Dorsolateral prefrontal cortex (tissue), 120 donors: ENCODE measurements at regions of chr21 and their contacts with region 1.

Region 1: DNA sequence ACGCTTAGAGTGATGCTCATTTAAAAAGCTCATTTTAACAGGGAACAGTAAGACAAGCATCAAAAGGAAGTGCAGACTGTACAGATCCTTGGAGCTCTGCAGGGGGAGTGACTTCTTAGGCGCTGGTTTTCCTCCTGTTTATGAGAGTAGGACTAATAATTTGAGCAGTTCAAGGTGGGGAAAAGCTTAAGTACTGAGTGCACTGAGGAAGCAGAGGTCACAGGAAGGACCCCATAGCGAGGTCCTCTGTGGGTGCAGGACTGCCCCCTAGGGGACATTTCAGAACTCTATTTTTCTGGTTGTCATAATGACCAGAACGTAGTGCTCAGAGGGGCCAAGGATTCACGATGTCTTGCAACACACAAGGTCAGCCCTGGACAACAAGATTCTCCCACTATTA is 112.1 kb downstream of the HLCS start:
- DNase-seq: peak in 4 of 10 donors; percentile 11 to 49 (median 34)
- H3K4me3 ChIP-seq: peak overlapping the region in 1 of 59 donors; percentile 5
- H3K27ac ChIP-seq: peak overlapping the region in 2 of 59 donors; percentile 12 to 50
- H3K27me3 ChIP-seq: no peaks in the 10 kb centered on the region
- CTCF ChIP-seq: peak; percentile 39 to 92 (median 75)

Region 2: GRCh38 chr21:36028127-36029069 is 826.0 kb before region 1 on chr21:
- intact Hi-C with region 1: no loop called
- DNase-seq: peak; percentile 64 to 87 (median 76)
- H3K4me3 ChIP-seq: no peak overlapping the region
- H3K27ac ChIP-seq: no peak overlapping the region
- H3K27me3 ChIP-seq: no peaks in the 10 kb centered on the region
- CTCF ChIP-seq: peak; percentile 73 to 97 (median 94)

Region 3: DNA sequence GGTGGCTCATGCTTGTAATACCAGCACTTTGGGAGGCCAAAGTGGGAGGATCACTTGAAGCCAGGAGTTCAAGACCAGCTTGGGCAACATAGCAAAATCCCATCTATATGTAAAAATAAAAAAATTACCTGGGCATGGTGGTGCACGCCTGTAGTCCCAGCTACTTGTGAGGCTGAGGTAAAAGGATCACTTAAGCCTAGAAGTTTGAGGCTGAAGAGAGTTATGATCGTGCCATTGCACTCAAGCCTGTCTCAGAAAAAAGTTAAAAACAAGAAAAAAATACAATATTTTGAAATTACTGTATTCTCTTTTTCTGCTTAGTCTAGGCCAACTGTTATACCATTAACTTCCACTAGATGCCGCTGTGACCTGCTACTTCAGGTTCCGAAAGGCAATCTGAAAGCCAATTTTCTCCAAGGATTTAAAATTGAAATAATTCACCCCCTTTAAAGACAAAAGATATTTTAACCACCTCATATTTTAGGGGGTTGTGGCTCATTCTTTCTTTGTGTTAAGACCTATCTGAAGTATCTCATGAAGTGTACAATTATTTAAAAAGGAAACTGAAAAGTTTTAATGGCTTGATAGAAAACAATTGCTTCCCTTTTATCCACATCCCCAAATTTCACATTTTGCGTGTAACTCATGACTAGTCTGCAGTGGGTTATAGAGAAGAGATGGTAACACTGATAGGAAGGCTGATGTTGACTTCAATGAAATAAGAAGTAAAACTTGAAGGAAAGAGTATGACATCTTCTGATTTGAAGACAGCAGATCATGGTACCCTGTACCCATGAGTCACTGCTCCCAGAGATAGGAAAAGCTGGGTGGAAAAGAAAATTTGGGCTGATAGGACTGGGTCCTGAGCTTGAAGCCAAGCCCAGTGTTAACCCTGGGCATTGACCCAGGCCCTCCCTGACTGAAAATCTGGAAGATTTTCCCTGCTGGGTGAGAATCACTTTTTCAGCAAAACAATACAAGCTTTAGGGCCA is 350.0 kb before region 1 on chr21:
- intact Hi-C with region 1: loop called in 1 of 2 experiments (anchors 5 kb)
- DNase-seq: peak in 2 of 10 donors; percentile 37 to 43
- H3K4me3 ChIP-seq: no peak overlapping the region
- H3K27ac ChIP-seq: no peak overlapping the region
- H3K27me3 ChIP-seq: peaks cover 0 to under 1% (median 0%) of the 10 kb centered on the region in 45 donors
- CTCF ChIP-seq: peak; percentile 83 to 99 (median 95)

Region 4: DNA sequence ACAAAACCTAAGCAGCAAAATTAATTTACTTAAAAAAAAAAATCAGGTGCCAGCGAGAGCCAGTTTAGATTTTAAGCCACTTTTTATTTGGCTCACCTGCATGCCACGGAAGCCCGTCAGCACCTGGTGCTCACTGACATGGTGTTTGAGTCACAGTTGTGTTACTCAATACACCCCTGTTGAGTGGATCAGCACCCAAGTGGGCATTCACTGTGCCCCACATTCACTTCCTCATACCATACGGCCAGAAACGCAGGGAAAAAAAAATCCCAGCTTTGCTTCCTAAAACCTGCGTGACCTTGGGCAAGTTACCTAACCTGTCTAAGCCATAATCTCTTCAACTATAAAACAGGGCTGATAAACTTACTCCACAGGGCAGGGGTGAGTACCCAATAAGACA is 198.3 kb before region 1 on chr21:
- intact Hi-C with region 1: loop called (anchors 5 kb)
- DNase-seq: no peak
- H3K4me3 ChIP-seq: no peak overlapping the region
- H3K27ac ChIP-seq: peak overlapping the region in 1 of 59 donors; percentile 89
- H3K27me3 ChIP-seq: peaks cover 0 to 36% (median 10%) of the 10 kb centered on the region in 45 donors
- CTCF ChIP-seq: no peak

Region 5: GRCh38 chr21:36747815-36748383 is 106.5 kb before region 1 on chr21:
- intact Hi-C with region 1: loop called in 1 of 2 experiments (anchors 5 kb)
- DNase-seq: peak in 9 of 10 donors; percentile 42 to 80 (median 55)
- H3K4me3 ChIP-seq: peak overlapping the region; percentile 43 to 79 (median 66)
- H3K27ac ChIP-seq: peak overlapping the region in 20 of 59 donors; percentile 28 to 83 (median 60)
- H3K27me3 ChIP-seq: no peaks in the 10 kb centered on the region
- CTCF ChIP-seq: peak in 15 of 56 donors; percentile 1 to 36 (median 13)

Region 6: DNA sequence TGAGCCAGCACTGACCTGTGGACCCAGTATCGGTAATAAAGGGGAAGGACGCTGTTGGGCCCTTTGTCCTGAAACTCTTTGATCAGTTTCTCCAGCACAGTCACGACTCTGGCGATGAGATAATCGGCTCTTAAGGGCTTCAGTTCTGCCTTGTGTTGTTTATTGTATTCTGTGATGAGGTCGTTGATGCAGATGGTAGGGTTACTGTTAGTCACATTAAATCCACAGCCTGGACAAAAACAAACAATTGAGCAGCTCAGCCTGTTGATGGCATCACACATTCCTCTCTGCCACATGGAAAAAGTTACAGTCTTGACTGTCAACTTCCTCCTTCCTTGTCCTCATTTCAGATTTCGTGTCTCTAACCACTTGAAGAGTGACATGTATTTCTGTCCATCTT is 97.9 kb before region 1 on chr21:
- intact Hi-C with region 1: loop called in 1 of 2 experiments (anchors 2 kb)
- DNase-seq: peak in 1 of 10 donors; percentile 63
- H3K4me3 ChIP-seq: peak overlapping the region in 6 of 59 donors; percentile 2 to 27 (median 16)
- H3K27ac ChIP-seq: peak overlapping the region in 56 of 59 donors; percentile 4 to 89 (median 70)
- H3K27me3 ChIP-seq: no peaks in the 10 kb centered on the region
- CTCF ChIP-seq: no peak

Region 7: GRCh38 chr21:36773117-36773516 is 81.3 kb before region 1 on chr21:
- intact Hi-C with region 1: loop called in 1 of 2 experiments (anchors 2 kb)
- DNase-seq: peak in 1 of 10 donors; percentile 92
- H3K4me3 ChIP-seq: no peak overlapping the region
- H3K27ac ChIP-seq: peak overlapping the region in 18 of 59 donors; percentile 1 to 64 (median 39)
- H3K27me3 ChIP-seq: no peaks in the 10 kb centered on the region
- CTCF ChIP-seq: no peak

Region 8: DNA sequence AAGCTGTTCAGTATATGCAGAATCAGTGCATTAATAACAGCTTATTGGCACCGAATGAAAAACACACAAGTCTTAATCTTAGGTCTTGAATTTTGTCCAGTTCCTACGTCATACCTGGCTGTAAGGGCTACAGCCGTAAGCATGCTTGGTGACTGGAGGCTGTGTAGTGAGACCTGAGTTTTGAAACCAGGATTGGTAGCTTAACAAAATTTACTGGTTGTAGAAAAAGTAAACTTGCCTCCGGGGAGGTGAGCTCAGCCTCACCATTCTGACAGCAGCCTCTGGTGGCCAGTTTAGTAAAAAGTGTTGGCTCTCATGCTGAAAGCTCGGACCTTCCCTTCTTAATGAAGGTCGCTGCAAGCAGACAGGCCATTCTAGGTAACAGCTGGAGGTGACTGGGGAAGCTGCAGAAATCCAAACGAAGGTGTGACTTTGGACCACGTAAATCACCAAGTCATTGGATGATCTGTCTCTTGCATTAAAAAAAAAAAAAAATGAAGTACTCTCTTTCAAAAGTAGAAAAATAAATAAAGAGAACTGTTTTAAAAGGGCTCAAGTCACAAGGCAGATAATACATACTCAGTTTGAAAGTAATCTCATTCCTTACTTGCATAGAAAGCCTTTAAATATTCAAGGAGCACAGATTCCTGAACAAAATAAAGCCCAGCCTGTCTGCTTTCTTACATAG is 63.2 kb after region 1 on chr21:
- intact Hi-C with region 1: loop called in 1 of 2 experiments (anchors 10 kb)
- DNase-seq: peak in 3 of 10 donors; percentile 22 to 43 (median 41)
- H3K4me3 ChIP-seq: peak overlapping the region in 1 of 59 donors; percentile 12
- H3K27ac ChIP-seq: no peak overlapping the region
- H3K27me3 ChIP-seq: no peaks in the 10 kb centered on the region
- CTCF ChIP-seq: peak; percentile 23 to 72 (median 56)